ENCODE measurements at regions of chr9 and their contacts with region 1.

Region 1: GRCh38 chr9:3441197-3441816 is 84.5 kb downstream of the RFX3 start:
- DNase-seq: peak; percentile 44
- CTCF ChIP-seq: peak; percentile 45

Region 2: DNA sequence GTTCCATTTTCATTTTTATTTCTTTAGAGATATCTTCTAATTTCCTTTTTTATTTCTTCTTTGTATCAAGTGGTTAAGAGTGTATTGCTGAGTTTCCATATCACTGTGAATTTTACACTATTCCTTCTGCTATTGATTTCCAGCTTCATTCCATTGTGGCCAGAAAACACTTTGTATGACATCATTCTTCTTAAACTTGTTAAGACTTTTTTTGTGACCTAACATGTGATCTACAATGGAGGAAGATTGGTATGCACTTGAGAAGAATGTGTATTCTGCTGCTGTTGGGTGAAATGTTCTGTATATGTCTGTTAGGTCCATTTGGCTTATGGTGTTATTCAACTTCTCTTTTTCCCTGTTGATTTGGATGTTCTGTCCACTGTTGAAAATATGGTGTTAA is 323.2 kb before region 1 on chr9:
- CTCF ChIA-PET with region 1: no interaction called
- POLR2A ChIA-PET with region 1: no interaction called
- DNase-seq: no peak
- CTCF ChIP-seq: no peak

Region 3: DNA sequence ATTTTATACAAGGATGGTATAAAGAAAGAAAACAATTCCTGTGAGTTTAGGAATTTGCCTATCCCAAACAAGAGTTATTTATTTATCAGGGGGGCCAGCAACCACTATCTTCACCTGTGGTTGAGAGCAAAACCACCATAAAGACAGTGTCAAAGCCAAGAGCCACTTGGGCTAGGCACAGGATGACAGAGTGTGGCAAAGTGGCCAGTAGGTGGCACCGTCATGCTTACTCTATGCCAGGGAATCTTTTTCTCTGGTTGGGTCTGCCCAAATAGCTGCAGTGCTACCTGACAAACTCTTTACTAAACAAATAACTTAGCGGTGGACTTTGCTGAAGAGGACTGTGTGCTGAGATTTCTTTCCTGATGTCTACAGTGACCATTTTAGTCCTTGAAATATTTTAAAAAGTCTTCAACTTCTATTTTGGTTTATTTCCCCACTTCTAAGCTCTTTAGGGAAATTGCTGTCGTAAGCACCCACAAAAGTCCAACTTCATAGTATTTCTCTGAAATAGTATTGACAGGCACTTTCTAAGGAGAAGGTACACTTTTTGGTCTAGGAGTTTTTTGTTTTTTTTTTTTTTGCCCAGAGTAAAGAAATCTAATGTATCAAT is 200.5 kb before region 1 on chr9:
- CTCF ChIA-PET with region 1: interaction called, 43 read pairs
- POLR2A ChIA-PET with region 1: no interaction called
- DNase-seq: peak; percentile 54
- CTCF ChIP-seq: peak; percentile 86

Region 4: GRCh38 chr9:3331817-3332216 is 109.5 kb before region 1 on chr9:
- CTCF ChIA-PET with region 1: interaction called, 11 read pairs
- POLR2A ChIA-PET with region 1: no interaction called
- DNase-seq: no peak
- CTCF ChIP-seq: peak; percentile 11

Region 5: GRCh38 chr9:3348169-3348568 is 93.1 kb before region 1 on chr9:
- CTCF ChIA-PET with region 1: no interaction called
- POLR2A ChIA-PET with region 1: no interaction called
- DNase-seq: no peak
- CTCF ChIP-seq: no peak

Region 6: DNA sequence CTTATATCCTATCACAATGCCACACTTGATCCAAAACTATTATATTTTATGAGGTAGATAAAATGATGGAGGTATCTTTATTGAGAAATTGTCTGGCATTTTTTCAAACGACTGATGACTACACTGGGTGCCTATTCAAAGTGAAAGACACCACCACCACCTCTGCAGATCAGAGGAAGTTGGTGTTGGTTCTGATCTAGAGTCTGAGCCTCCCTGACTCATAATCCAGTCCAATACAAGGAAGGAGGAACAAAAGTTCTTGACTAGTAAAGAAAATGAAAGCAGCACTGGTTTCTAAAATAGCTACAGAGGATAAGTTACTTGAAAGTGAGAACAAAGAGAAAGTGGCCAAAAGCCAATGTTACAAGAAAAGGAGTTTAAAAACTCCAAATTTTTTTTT is 55.4 kb before region 1 on chr9:
- CTCF ChIA-PET with region 1: interaction called, 14 read pairs
- POLR2A ChIA-PET with region 1: no interaction called
- DNase-seq: peak; percentile 32
- CTCF ChIP-seq: no peak

Region 7: GRCh38 chr9:3419893-3420292 is 21.4 kb before region 1 on chr9:
- CTCF ChIA-PET with region 1: interaction called, 19 read pairs
- POLR2A ChIA-PET with region 1: no interaction called
- DNase-seq: no peak
- CTCF ChIP-seq: no peak

Region 8: GRCh38 chr9:3458806-3459475 is 17.6 kb after region 1 on chr9:
- CTCF ChIA-PET with region 1: interaction called, 10 read pairs
- POLR2A ChIA-PET with region 1: no interaction called
- DNase-seq: no peak
- CTCF ChIP-seq: no peak

Region 9: GRCh38 chr9:3473405-3473804 is 32.1 kb after region 1 on chr9:
- CTCF ChIA-PET with region 1: interaction called, 12 read pairs
- POLR2A ChIA-PET with region 1: no interaction called
- DNase-seq: no peak
- CTCF ChIP-seq: no peak